Activated T-helper 2 cell treated with anti-CD3 and anti-CD28 coated beads, Interferon-gamma antibody, Interleukin-2, Interleukin-4, amounts not matched to agents 10 μg/mL and 5 μg/mL and 100 μg/mL, durations not matched to agents 14 hours and 24 hours and 36 hours (primary cell): ENCODE measurements at regions of chrX and their contacts with region 1.

Region 1: GRCh38 chrX:30504309-30504708 is 73.3 kb downstream of the TASL start:
- DNase-seq: no peak
- H3K4me3 Mint-ChIP-seq: no peak overlapping the region
- H3K27ac Mint-ChIP-seq: no peak overlapping the region
- H3K4me1 Mint-ChIP-seq: no peaks in the 10 kb centered on the region
- H3K27me3 Mint-ChIP-seq: peaks cover 11% of the 10 kb centered on the region

Region 2: GRCh38 chrX:30275498-30275897 is 228.8 kb before region 1 on chrX:
- intact Hi-C with region 1: loop called (anchors 10 kb)
- DNase-seq: no peak
- H3K4me3 Mint-ChIP-seq: no peak overlapping the region
- H3K27ac Mint-ChIP-seq: no peak overlapping the region
- H3K4me1 Mint-ChIP-seq: peaks cover 5% of the 10 kb centered on the region
- H3K27me3 Mint-ChIP-seq: peaks cover 1% of the 10 kb centered on the region

Region 3: DNA sequence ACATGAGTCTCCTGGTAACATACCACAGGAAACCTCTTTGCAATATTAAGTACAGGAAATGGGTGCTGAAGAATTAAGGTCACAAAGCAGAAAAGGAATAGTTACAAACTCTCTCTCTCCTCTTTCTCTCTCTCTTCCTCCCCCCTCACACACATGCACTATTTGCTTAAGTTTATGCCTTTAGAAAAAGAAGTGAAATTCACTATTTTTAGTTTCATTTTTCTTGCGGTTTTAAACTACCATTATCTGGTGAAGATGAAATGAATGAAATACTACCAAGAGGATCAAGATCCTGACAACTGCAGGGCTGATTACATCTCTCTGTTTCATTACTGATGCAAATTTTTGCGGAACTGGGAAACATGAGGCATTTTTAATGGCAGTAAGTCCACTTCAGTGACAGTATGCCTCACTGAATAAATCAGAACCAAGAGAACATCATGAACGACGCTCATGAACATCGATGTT is 631.9 kb after region 1 on chrX:
- intact Hi-C with region 1: no loop called
- DNase-seq: no peak
- H3K4me3 Mint-ChIP-seq: peak overlapping the region; percentile 5
- H3K27ac Mint-ChIP-seq: no peak overlapping the region
- H3K4me1 Mint-ChIP-seq: peaks cover 18% of the 10 kb centered on the region
- H3K27me3 Mint-ChIP-seq: no peaks in the 10 kb centered on the region